SK-N-SH (cell line): ENCODE measurements at regions of chr11 and their contacts with region 1.

Region 1: GRCh38 chr11:57277845-57278709 is 41.0 kb upstream of the APLNR start:
- DNase-seq: peak; percentile 73
- H3K4me3 ChIP-seq: peak overlapping the region in 1 of 2 experiments; percentile 39; a peak in 1 of 4 replicates
- H3K27ac ChIP-seq: peak overlapping the region in 1 of 2 experiments; percentile 32; a peak in 3 of 4 replicates
- H3K4me1 ChIP-seq: peaks cover 4 to 5% of the 10 kb centered on the region in 2 experiments; a peak in 1 of 4 replicates
- H3K27me3 ChIP-seq: no peaks in the 10 kb centered on the region
- CTCF ChIP-seq: peak; percentile 90
- EP300 ChIP-seq: no peak
- RAD21 ChIP-seq: peak; percentile 73

Region 2: DNA sequence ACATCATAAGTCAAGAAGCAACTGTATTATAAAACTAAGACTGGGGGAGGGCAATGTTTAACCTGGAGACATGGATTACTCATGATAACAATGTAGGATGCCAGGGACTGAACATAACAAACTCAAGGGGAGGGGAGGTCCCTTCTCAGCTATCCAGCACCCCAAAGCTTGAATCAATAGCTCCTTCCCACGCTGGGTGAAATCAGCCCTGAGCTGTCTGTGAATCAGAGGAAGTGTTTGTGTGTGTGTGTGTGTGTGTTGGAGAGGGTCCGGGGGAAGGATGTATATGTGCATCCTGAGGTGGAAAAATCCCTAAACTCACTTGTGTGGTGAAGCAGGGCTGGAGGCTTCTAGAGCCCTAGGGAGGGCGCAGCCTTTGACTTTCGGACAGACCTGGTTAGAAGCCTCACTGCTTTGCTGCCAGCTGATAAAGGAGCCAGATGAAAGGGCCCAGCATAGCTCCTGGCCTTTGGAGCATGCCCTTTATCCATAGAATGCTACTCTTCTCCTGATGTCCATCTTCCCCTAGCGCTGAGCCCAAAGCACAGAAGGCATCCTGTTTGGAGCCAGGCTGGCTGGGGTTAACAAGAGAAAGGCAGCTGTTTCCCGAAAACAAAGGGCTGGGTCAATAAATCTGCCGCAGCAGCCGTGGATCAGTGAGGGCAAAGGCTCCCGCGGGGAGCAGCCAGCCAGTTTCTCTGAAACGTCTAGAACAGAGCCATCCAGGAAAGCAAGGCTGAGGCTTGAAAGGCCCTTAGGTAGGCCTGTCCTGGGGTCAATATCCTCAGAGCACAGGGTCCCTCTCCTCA is 10.9 kb after region 1 on chr11:
- CTCF ChIA-PET with region 1: interaction called, 13 read pairs
- POLR2A ChIA-PET with region 1: no interaction called
- DNase-seq: peak; percentile 20
- H3K4me3 ChIP-seq: no peak overlapping the region
- H3K27ac ChIP-seq: peak overlapping the region in 1 of 2 experiments; percentile 55; a peak in 2 of 4 replicates
- H3K4me1 ChIP-seq: peaks cover 4 to 7% of the 10 kb centered on the region in 2 experiments; a peak in 2 of 4 replicates
- H3K27me3 ChIP-seq: no peaks in the 10 kb centered on the region
- CTCF ChIP-seq: no peak
- EP300 ChIP-seq: no peak
- RAD21 ChIP-seq: no peak